Cardiac septum (tissue), 1 donor: ENCODE measurements at regions of chr10 and their contacts with region 1.

Region 1: GRCh38 chr10:19819419-19820033 is 3.3 kb downstream of the PLXDC2 start:
- DNase-seq: no peak

Region 2: GRCh38 chr10:19629567-19629966 is 190.0 kb before region 1 on chr10:
- intact Hi-C with region 1: loop called (anchors 10 kb)
- DNase-seq: peak; percentile 83

Region 3: DNA sequence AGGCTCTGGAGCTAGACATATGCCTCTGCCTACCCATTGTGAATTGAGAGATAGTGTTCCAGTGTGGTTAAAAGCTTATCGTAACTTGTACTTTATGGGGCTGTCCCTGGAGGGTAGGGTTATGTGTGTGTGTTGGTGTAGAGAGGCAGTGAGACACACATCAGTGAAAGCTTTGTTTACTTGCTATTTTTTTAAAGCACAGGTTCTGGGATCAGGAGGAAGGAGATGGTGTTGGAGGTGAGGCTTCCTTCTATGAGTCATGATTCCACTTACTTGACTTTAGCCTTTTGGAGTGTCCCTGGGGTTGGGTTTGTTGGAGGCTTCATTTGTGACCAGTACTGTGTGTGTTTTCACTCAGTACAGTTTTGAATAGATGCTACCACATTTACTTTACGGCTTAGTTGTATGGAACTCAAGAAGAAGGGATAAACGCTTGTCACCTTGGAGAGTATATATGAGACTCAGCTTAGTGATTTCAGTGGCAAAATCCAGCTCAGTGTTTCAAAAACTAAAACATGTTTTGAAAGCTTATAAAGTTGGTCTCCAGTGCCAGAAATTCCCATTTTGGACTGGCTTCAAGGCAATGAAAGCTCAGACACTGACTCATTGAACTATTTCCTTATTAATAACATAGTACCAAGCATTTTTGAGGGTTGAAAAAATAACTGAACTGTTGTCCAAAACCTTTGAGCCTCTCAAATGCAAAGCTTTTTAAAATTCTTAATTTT is 102.9 kb after region 1 on chr10:
- intact Hi-C with region 1: loop called (anchors 5 kb)
- DNase-seq: no peak

Region 4: DNA sequence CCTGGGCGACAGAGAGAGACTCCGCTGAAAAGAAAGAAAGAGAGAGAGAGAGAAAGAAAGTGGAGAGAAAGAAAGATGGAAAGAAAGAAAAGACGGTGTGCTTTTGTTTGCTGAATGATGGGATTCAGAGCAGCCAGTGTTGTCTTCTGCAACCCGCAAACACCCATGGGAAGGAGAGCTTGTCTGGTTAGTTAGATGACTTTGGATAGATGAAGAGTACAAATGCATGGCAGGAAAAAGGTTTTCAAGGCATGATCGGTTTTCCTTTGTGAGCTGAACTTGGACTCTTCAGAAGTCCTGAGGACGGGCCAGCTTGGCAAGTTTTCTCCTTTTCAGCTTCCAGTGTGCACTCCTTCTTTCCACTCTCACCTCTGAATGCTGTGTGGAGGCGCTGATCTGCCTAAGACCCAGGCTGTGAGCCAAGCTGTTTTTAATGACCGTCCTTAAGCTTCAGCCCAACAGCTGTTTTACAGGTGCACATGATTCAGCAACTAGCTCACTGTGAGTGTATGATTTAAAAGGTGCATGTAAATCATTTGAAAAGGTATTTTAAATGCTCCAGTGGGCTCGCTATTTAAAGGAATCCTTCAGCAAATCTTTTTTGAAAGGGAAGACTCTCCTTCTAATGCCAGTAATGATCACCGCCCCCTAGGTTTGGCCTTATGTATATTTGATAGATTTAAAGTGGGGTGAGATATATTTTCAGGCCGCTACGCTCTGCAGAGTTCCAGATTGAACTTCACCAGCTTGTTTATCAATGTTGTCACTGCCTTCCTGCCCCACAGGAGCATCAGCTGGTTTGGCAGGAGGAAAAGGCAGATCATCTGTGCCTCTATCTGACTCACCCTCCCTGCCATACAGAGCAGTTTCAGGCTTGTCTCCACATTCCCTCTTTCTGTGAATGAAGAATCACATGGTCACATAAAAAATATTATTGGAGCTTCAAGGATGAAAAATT is 111.7 kb after region 1 on chr10:
- intact Hi-C with region 1: loop called (anchors 5 kb)
- DNase-seq: no peak

Region 5: GRCh38 chr10:20004087-20004523 is 184.6 kb after region 1 on chr10:
- intact Hi-C with region 1: loop called (anchors 10 kb)
- DNase-seq: no peak

Region 6: DNA sequence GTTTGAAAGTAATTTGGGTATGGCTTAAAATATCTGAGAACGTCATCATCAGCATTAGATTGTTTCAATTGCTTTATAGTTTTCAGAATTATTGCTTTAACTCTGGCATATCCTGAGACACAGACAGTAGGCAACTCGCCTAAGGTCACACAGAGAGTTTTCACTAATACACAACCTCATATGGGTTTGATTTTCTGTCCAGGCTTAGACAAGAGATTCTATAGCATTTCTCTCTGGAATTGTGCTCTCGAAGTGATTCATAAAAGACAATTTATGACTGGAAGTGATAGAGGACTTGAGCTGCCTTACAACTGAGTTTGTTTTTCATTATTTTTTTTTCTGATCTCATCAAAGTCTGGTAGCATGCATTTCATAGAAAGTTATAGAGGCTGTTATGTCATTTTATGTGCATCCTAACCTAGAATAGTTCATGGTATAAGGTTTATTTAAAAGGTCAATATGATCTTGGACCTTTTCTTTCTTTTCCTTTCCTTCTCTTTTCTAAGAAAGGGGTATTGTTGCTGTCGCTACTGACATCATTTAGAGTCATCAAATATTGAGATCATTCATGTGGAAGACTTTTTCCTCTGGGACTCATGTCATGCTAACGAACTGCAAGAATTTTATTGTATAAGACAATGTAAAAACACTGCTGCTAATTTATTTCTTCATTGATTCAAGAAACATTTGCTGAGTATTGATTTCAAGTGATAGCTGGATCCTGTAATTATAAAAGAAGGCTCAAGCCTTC is 274.9 kb after region 1 on chr10:
- intact Hi-C with region 1: loop called (anchors 10 kb)
- DNase-seq: no peak

Region 7: GRCh38 chr10:20768843-20769242 is 949.3 kb after region 1 on chr10:
- intact Hi-C with region 1: loop called (anchors 5 kb)
- DNase-seq: no peak